H1 (cell line): ENCODE measurements at regions of chr5 and their contacts with region 1.

Region 1: DNA sequence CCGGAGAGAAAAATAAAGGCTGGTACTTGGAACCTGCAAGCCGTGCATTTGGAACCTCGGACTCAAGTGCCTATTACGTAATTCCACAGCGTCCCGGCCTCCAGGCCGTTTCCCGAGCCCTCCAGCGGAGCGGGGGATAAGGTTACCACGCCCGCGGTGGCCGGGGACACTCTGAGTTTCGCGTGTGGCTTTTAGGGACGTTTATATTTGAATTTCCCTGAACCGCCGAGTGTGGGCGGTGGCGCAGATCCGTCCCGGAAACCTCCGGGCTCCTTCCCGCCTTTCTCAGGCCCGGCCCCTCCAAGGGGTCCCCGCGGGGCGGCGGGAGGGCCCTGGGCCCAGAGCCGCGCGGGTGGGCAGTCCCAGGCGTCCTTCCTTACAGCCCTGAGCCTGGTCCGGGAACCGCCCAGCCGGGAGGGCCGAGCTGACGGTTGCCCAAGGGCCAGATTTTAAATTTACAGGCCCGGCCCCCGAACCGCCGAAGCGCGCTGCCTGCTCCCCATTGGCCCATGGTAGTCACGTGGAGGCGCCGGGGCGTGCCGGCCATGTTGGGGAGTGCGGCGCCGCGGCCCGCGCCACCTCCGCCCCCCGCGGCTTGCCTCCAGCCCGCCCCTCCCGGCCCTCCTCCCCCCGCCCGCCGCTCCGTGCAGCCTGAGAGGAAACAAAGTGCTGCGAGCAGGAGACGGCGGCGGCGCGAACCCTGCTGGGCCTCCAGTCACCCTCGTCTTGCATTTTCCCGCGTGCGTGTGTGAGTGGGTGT is at the start of gene LMNB1:
- DNase-seq: peak; percentile 93 to 96
- H3K4me3 ChIP-seq: peak within 1 kb of the TSS; percentile 84 to 95 (median 90)
- H3K27ac ChIP-seq: peak within 1 kb of the TSS; percentile 99
- H3K4me1 ChIP-seq: peaks cover 0 to 12% (median 0%) of the 10 kb centered on the region in 4 experiments; a peak in 3 of 7 replicates
- H3K27me3 ChIP-seq: no peaks in the 10 kb centered on the region
- CTCF ChIP-seq: no peak
- EP300 ChIP-seq: no peak; a peak in 1 of 3 replicates
- POLR2A ChIP-seq: peak; percentile 77 to 95
- RAD21 ChIP-seq: peak; percentile 2 to 26; a peak in 1 of 4 replicates
- total RNA-seq, gene LMNB1: 225 and 229 TPM in 2 replicates

Region 2: DNA sequence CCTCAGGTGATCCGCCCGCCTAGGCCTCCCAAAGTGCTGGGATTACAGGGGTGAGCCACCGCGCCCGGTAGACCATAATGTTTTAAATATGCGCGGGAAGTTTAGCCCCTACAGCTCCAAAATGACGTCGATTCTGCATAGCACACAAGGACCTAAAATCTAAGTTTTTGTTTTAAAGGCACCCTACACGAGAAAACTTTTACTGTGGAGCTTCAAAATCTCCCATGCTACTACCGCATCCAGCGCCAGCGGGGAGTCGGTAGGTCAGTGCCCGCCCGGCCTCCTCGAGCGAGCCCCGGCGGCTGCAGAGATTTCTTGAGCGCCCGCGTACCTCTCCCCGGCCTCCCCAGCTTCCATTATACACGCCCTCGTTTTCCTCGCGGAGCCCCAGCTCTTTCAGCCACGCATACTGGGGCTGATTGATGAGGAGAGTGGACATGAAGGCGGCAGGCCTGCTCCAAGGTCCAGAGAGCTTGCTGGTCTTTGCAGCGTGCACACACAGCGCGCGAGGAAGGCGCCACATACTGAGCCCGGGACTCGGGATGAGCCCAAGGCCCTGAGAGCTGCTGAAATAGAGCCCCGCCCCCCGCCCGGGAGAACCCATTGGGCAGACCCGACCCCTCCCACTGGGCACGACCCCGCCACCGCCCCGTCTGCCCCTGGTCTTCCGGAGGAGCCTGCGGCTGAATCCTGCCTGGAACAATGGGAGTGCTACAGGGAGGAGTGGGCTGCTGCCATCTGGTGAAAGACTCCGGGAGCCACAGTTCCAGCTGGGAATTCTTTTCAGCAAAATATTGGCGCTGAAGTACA is 181.8 kb before region 1 on chr5 and contains the start of gene ALDH7A1:
- CTCF ChIA-PET with region 1: interaction called, 4 read pairs
- POLR2A ChIA-PET with region 1: interaction called, 23 read pairs
- DNase-seq: peak; percentile 88 to 96
- H3K4me3 ChIP-seq: peak within 1 kb of the TSS; percentile 79 to 98 (median 86)
- H3K27ac ChIP-seq: peak within 1 kb of the TSS; percentile 89
- H3K4me1 ChIP-seq: peaks cover 0 to 14% (median 2%) of the 10 kb centered on the region in 4 experiments; a peak in 3 of 7 replicates
- H3K27me3 ChIP-seq: no peaks in the 10 kb centered on the region
- CTCF ChIP-seq: peak; percentile 59 to 71 (median 67)
- EP300 ChIP-seq: peak in 1 of 2 experiments; percentile 49; a peak in 1 of 3 replicates
- POLR2A ChIP-seq: peak; percentile 77 to 94
- RAD21 ChIP-seq: peak; percentile 55 to 70
- total RNA-seq, gene ALDH7A1: 205 and 225 TPM in 2 replicates

Region 3: DNA sequence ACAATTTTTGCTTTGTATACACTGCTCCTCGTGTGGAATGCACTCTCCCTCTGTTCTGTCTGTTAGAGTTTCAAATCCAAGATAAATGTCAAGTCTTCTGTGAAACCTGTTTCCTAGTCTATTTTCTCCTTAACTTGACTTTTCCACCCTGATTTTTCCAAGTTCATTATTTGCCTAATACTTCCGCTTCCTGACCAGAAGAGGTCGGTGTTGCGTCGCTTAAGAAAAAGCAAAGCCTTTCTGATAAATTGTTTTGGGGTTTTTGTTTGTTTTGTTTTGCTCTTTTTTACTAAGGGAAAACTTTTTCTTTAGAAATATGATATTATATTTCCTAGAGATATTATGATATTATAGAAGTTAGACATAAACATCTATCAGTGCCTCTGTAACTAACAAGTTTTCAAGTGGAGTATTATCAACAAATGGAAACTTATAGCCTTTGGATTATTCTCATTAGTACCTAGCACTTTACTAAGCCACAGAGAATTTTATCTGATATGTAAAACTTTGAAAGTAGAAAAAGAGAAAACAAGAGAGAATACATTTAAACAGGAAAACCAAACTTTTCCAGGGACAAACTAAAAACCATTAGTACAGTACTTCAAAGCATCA is 120.2 kb before region 1 on chr5:
- CTCF ChIA-PET with region 1: interaction called, 40 read pairs
- POLR2A ChIA-PET with region 1: interaction called, 16 read pairs
- DNase-seq: no peak
- H3K4me3 ChIP-seq: no peak overlapping the region
- H3K27ac ChIP-seq: no peak overlapping the region
- H3K4me1 ChIP-seq: peaks cover 0 to 4% (median 0%) of the 10 kb centered on the region in 4 experiments; a peak in 1 of 7 replicates
- H3K27me3 ChIP-seq: no peaks in the 10 kb centered on the region
- CTCF ChIP-seq: peak in 2 of 3 experiments; percentile 66 to 68; a peak in 3 of 4 replicates
- EP300 ChIP-seq: no peak
- POLR2A ChIP-seq: no peak
- RAD21 ChIP-seq: peak; percentile 94 to 95

Region 4: GRCh38 chr5:126686451-126687126 is 90.1 kb before region 1 on chr5:
- CTCF ChIA-PET with region 1: interaction called, 251 read pairs
- POLR2A ChIA-PET with region 1: interaction called, 146 read pairs
- DNase-seq: no peak
- H3K4me3 ChIP-seq: no peak overlapping the region
- H3K27ac ChIP-seq: peak overlapping the region; percentile 26; the same call in 1 of the 2 replicates
- H3K4me1 ChIP-seq: peaks cover 1 to 6% (median 2%) of the 10 kb centered on the region in 4 experiments; a peak in 4 of 7 replicates
- H3K27me3 ChIP-seq: no peaks in the 10 kb centered on the region
- CTCF ChIP-seq: no peak
- EP300 ChIP-seq: no peak
- POLR2A ChIP-seq: no peak
- RAD21 ChIP-seq: no peak

Region 5: GRCh38 chr5:126755593-126755992 is 21.1 kb before region 1 on chr5:
- CTCF ChIA-PET with region 1: interaction called, 7 read pairs
- POLR2A ChIA-PET with region 1: interaction called, 30 read pairs
- DNase-seq: no peak
- H3K4me3 ChIP-seq: no peak overlapping the region
- H3K27ac ChIP-seq: no peak overlapping the region
- H3K4me1 ChIP-seq: peaks cover 0 to 4% (median 2%) of the 10 kb centered on the region in 4 experiments; a peak in 3 of 7 replicates
- H3K27me3 ChIP-seq: no peaks in the 10 kb centered on the region
- CTCF ChIP-seq: no peak
- EP300 ChIP-seq: no peak
- POLR2A ChIP-seq: no peak
- RAD21 ChIP-seq: no peak

Region 6: DNA sequence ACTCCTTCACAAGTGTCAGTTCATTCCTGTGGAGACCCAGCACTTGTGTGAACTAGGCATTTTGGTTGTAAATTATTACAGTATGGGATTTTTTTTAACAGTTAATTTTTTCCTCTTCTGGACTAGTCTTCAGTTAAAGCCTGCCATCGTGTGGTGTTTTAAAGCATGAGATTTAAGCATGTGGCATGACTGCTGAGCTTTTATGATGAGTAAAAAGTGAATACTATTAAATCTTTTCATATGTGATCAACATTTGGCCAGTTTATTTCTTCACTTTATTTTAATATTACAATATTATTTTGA is 25.3 kb after region 1 on chr5:
- CTCF ChIA-PET with region 1: interaction called, 38 read pairs
- POLR2A ChIA-PET with region 1: interaction called, 32 read pairs
- DNase-seq: no peak
- H3K4me3 ChIP-seq: no peak overlapping the region; a peak in 1 of 8 replicates
- H3K27ac ChIP-seq: no peak overlapping the region
- H3K4me1 ChIP-seq: 0 out of 7 replicates have a peak, but pooled peaks cover 0 to 3% (median 0%) of the 10 kb centered on the region in 4 experiments
- H3K27me3 ChIP-seq: no peaks in the 10 kb centered on the region
- CTCF ChIP-seq: no peak
- EP300 ChIP-seq: no peak
- POLR2A ChIP-seq: no peak
- RAD21 ChIP-seq: peak; percentile 15 to 18; a peak in 3 of 4 replicates